Panc1 (cell line): ENCODE measurements at regions of chr13 and their contacts with region 1.

Region 1: GRCh38 chr13:75482070-75482819 is at the start of gene TBC1D4:
- DNase-seq: peak; percentile 52
- ATAC-seq: peak; percentile 91
- H3K4me3 ChIP-seq: peak within 1 kb of the TSS; percentile 54 to 66
- H3K27ac ChIP-seq: peak within 1 kb of the TSS; percentile 54
- H3K4me1 ChIP-seq: no peaks in the 10 kb centered on the region
- H3K27me3 ChIP-seq: no peaks in the 10 kb centered on the region
- CTCF ChIP-seq: peak; percentile 89
- total RNA-seq, gene TBC1D4: 5.5 TPM

Region 2: DNA sequence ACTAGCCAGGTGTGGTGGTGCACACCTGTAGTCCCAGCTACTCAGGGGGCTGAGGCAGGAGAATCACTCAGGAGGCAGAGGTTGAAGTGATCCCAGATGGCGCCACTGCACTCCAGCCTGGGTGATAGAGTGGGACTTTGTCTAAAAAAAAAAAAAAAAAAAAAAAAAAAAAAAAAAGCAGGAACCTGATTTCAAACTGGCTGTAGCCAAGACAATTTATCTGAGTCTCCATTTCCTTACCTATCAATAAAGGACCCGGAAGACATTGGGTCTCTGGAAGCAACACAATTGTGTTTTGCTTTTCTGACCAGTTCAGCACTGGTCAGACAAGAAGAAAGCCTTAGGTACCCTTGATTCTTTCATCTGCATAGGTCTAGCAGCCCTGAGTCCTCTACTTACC is 491.3 kb before region 1 on chr13:
- CTCF ChIA-PET with region 1: no interaction called
- POLR2A ChIA-PET with region 1: no interaction called
- in situ Hi-C with region 1: no loop called
- intact Hi-C with region 1: no loop called
- DNase-seq: no peak
- ATAC-seq: no peak
- H3K4me3 ChIP-seq: no peak overlapping the region
- H3K27ac ChIP-seq: no peak overlapping the region
- H3K4me1 ChIP-seq: no peaks in the 10 kb centered on the region
- H3K27me3 ChIP-seq: no peaks in the 10 kb centered on the region
- CTCF ChIP-seq: no peak

Region 3: GRCh38 chr13:75372517-75372916 is 109.7 kb before region 1 on chr13:
- CTCF ChIA-PET with region 1: interaction called, 4 read pairs
- POLR2A ChIA-PET with region 1: no interaction called
- in situ Hi-C with region 1: no loop called
- intact Hi-C with region 1: loop called (anchors 5 kb)
- DNase-seq: no peak
- ATAC-seq: no peak
- H3K4me3 ChIP-seq: no peak overlapping the region
- H3K27ac ChIP-seq: no peak overlapping the region
- H3K4me1 ChIP-seq: no peaks in the 10 kb centered on the region
- H3K27me3 ChIP-seq: no peaks in the 10 kb centered on the region
- CTCF ChIP-seq: peak; percentile 77

Region 4: DNA sequence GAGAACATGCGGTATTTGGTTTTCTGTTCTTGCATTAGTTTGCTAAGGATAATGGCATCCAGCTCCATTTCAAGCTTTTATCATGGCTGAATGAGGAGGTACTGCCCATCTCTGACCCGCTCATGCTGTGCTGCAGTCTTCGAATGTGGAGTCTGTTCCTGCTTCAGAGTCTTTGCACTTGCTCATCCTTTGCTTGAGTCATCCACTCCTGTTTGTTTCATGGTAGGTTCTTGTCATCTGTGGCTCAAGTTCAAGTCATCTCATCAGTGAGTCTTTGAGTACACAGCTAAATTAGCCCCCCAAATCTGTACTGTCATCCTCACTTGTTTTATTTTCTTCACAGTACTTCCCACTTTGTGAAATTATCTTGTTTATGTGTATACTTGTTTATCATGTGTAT is 72.7 kb after region 1 on chr13:
- CTCF ChIA-PET with region 1: no interaction called
- POLR2A ChIA-PET with region 1: no interaction called
- in situ Hi-C with region 1: no loop called
- intact Hi-C with region 1: no loop called
- DNase-seq: no peak
- ATAC-seq: no peak
- H3K4me3 ChIP-seq: no peak overlapping the region
- H3K27ac ChIP-seq: no peak overlapping the region
- H3K4me1 ChIP-seq: no peaks in the 10 kb centered on the region
- H3K27me3 ChIP-seq: no peaks in the 10 kb centered on the region
- CTCF ChIP-seq: no peak